ENCODE measurements at regions of chrX and their contacts with region 1.

Region 1: GRCh38 chrX:65745992-65746391 is 78.5 kb downstream of the MSN start:
- DNase-seq: no peak
- H3K4me3 Mint-ChIP-seq: no peak overlapping the region
- H3K27ac Mint-ChIP-seq: peak overlapping the region; percentile 25
- H3K4me1 Mint-ChIP-seq: peaks cover 24% of the 10 kb centered on the region
- H3K27me3 Mint-ChIP-seq: no peaks in the 10 kb centered on the region
- CTCF ChIP-seq: no peak

Region 2: DNA sequence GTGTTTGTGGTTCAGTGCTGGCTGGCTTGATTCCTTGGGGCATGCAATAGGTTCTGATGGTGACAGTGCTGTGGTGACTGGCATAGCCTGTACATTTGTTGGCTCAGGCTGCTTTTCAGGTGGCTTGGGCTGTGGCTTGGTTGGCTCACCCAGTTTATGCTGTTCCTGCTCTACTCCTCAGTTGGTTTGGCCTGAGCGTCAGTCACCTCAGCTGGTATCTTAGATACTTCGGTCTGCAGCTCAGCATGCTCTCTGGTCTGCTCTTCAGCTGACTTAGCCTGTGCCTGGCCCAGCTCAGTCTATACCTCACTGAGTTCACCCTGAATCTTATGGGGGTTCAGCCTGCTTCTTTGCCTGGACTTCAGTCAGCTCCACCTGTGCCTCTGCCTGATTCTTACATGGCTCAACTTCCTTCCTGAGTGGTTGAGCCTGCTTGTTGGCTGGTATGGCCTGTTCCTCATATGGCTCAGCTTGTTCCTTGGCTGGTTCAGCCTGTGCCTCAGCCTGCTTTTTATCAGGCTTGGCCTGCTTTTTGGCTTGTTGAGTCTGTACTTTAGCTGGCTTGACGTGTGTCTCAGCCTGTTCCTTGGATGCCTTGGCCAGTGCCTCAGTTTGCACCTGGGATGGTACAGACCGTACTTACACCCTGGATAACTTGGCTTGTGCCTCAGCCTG is 92.0 kb after region 1 on chrX:
- CTCF ChIA-PET with region 1: no interaction called
- intact Hi-C with region 1: no loop called
- DNase-seq: no peak
- H3K4me3 Mint-ChIP-seq: no peak overlapping the region
- H3K27ac Mint-ChIP-seq: no peak overlapping the region
- H3K4me1 Mint-ChIP-seq: no peaks in the 10 kb centered on the region
- H3K27me3 Mint-ChIP-seq: peaks cover 10% of the 10 kb centered on the region
- CTCF ChIP-seq: no peak

Region 3: GRCh38 chrX:65871661-65872311 is 125.8 kb after region 1 on chrX:
- CTCF ChIA-PET with region 1: no interaction called
- intact Hi-C with region 1: loop called (anchors 5 kb)
- DNase-seq: peak; percentile 73
- H3K4me3 Mint-ChIP-seq: no peak overlapping the region
- H3K27ac Mint-ChIP-seq: peak overlapping the region; percentile 57
- H3K4me1 Mint-ChIP-seq: peaks cover 17% of the 10 kb centered on the region
- H3K27me3 Mint-ChIP-seq: no peaks in the 10 kb centered on the region
- CTCF ChIP-seq: peak; percentile 42

Region 4: DNA sequence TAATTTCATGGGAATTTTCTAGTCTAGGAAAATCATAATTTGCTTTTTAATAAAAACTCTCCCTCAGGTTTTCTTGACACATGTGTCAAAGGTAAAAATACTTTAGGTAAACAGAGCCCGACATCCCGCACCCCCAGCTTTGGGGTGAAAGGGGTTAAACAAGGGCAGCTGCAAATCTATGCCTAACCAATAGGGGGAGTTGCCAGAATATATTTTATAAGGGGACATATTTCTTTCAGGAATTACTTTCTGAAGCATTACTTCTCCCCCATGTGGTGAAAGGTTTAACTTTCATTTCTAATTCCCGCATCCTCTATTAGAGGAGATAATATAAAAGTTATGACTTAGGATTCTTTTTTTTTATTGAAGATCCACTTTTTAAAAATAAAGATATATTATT is 364.1 kb after region 1 on chrX:
- CTCF ChIA-PET with region 1: no interaction called
- intact Hi-C with region 1: loop called (anchors 5 kb)
- DNase-seq: no peak
- H3K4me3 Mint-ChIP-seq: no peak overlapping the region
- H3K27ac Mint-ChIP-seq: no peak overlapping the region
- H3K4me1 Mint-ChIP-seq: no peaks in the 10 kb centered on the region
- H3K27me3 Mint-ChIP-seq: no peaks in the 10 kb centered on the region
- CTCF ChIP-seq: no peak